IMR-90 (cell line): ENCODE measurements at regions of chr11 and their contacts with region 1.

Region 1: GRCh38 chr11:14907411-14908213 is 15.6 kb upstream of the CYP2R1 start:
- DNase-seq: peak; percentile 21
- ATAC-seq: peak; percentile 77
- H3K4me3 ChIP-seq: no peak overlapping the region
- H3K27ac ChIP-seq: no peak overlapping the region
- H3K4me1 ChIP-seq: no peaks in the 10 kb centered on the region
- H3K27me3 ChIP-seq: peaks cover 1% of the 10 kb centered on the region
- CTCF ChIP-seq: peak; percentile 58
- POLR2A ChIP-seq: no peak
- RAD21 ChIP-seq: peak; percentile 52

Region 2: DNA sequence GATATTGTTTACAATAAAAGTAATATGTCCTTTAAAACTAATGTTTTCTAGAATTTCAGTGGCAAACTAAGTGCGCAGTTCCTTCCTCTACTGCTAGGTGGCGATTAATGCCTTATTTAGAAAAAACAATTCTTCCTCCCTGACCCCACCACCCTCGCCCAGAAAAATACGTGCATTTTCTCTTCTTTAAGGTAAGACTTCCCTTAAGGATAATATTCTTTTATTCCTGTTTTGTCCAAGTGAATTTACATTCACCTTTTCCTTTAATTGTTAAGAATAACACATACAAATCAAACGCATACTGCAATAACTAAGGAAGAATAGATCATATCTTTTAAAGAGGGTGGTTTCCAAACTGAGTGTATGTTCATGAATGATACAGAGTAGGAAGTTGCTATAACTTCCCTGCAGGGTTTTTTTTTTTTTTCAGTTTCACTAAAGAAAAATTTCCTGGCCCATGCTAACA is 370.4 kb before region 1 on chr11:
- CTCF ChIA-PET with region 1: no interaction called
- POLR2A ChIA-PET with region 1: no interaction called
- dilution Hi-C with region 1: no loop called
- in situ Hi-C with region 1: no loop called
- intact Hi-C with region 1: loop called (anchors 2 kb)
- DNase-seq: peak; percentile 15
- ATAC-seq: peak; percentile 86
- H3K4me3 ChIP-seq: no peak overlapping the region
- H3K27ac ChIP-seq: no peak overlapping the region
- H3K4me1 ChIP-seq: no peaks in the 10 kb centered on the region
- H3K27me3 ChIP-seq: peaks cover 5% of the 10 kb centered on the region
- CTCF ChIP-seq: peak; percentile 67
- POLR2A ChIP-seq: no peak
- RAD21 ChIP-seq: peak; percentile 56

Region 3: GRCh38 chr11:14789879-14790484 is 117.6 kb before region 1 on chr11:
- CTCF ChIA-PET with region 1: interaction called, 17 read pairs
- POLR2A ChIA-PET with region 1: no interaction called
- dilution Hi-C with region 1: no loop called
- in situ Hi-C with region 1: loop called (anchors 5 kb)
- intact Hi-C with region 1: loop called (anchors 1 kb)
- DNase-seq: peak; percentile 28
- ATAC-seq: peak; percentile 56; the same call in 1 of the 2 replicates
- H3K4me3 ChIP-seq: no peak overlapping the region
- H3K27ac ChIP-seq: no peak overlapping the region
- H3K4me1 ChIP-seq: no peaks in the 10 kb centered on the region
- H3K27me3 ChIP-seq: no peaks in the 10 kb centered on the region
- CTCF ChIP-seq: peak; percentile 65
- POLR2A ChIP-seq: no peak
- RAD21 ChIP-seq: peak; percentile 58

Region 4: GRCh38 chr11:15074206-15075161 is 166.9 kb after region 1 on chr11:
- CTCF ChIA-PET with region 1: interaction called, 3 read pairs
- POLR2A ChIA-PET with region 1: no interaction called
- dilution Hi-C with region 1: no loop called
- in situ Hi-C with region 1: no loop called
- intact Hi-C with region 1: loop called (anchors 1 kb)
- DNase-seq: peak; percentile 51
- ATAC-seq: peak; percentile 89
- H3K4me3 ChIP-seq: no peak overlapping the region; the same call in 1 of the 2 replicates
- H3K27ac ChIP-seq: no peak overlapping the region
- H3K4me1 ChIP-seq: peaks cover 4% of the 10 kb centered on the region; the same call in 1 of the 2 replicates
- H3K27me3 ChIP-seq: peaks cover 47% of the 10 kb centered on the region
- CTCF ChIP-seq: peak; percentile 64
- POLR2A ChIP-seq: no peak
- RAD21 ChIP-seq: peak; percentile 64

Region 5: GRCh38 chr11:15208378-15209222 is 301.0 kb after region 1 on chr11:
- CTCF ChIA-PET with region 1: interaction called, 8 read pairs
- POLR2A ChIA-PET with region 1: interaction called, 3 read pairs
- dilution Hi-C with region 1: no loop called
- in situ Hi-C with region 1: no loop called
- intact Hi-C with region 1: loop called (anchors 1 kb)
- DNase-seq: peak; percentile 53
- ATAC-seq: peak; percentile 98
- H3K4me3 ChIP-seq: no peak overlapping the region
- H3K27ac ChIP-seq: no peak overlapping the region
- H3K4me1 ChIP-seq: no peaks in the 10 kb centered on the region
- H3K27me3 ChIP-seq: no peaks in the 10 kb centered on the region
- CTCF ChIP-seq: peak; percentile 95
- POLR2A ChIP-seq: peak; percentile 65
- RAD21 ChIP-seq: peak; percentile 99